Caco-2 (cell line): ENCODE measurements at regions of chr1 and their contacts with region 1.

Region 1: DNA sequence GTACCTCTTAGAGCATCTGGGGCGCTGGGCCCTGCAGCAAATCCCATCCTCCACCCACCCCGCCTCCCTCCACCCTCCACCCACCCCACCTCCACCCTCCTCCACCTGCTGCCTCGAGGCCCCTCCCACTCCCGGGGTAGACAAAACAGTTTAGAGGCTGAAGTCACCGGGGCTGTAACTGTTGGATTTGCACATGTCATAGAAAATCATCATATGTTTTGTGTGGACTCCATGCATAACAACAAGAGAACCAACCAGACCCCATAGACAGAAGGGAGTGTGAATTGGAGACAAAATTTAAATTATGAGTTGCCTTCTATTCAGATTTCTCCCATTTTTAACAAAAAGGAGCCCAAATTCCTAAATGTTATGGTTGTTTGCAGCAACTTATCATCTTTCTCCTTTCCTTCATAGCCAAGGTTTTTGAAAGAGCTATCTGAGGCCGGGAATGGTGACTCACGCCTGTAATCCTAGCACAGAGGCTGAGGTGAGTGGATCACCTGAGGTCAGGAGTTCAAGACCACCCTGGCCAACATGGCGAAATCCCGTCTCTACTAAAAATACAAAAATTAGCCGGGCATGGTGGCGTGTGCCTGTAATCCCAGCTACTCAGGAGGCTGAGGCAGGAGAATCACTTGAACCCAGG is 28.2 kb upstream of the LGALS8 start:
- DNase-seq: peak; percentile 68 to 75
- H3K4me3 ChIP-seq: no peak overlapping the region
- H3K4me3 Mint-ChIP-seq: peak overlapping the region; percentile 25
- H3K27ac Mint-ChIP-seq: peak overlapping the region; percentile 79
- H3K4me1 ChIP-seq: peaks cover 48% of the 10 kb centered on the region
- H3K4me1 Mint-ChIP-seq: peaks cover 57% of the 10 kb centered on the region
- H3K27me3 ChIP-seq: no peaks in the 10 kb centered on the region
- H3K27me3 Mint-ChIP-seq: no peaks in the 10 kb centered on the region
- CTCF ChIP-seq: no peak

Region 2: GRCh38 chr1:236394905-236395780 is 100.4 kb before region 1 on chr1:
- CTCF ChIA-PET with region 1: interaction called, 3 read pairs
- POLR2A ChIA-PET with region 1: no interaction called
- intact Hi-C with region 1: loop called (anchors 2 kb)
- DNase-seq: peak; percentile 55 to 65
- H3K4me3 ChIP-seq: peak overlapping the region; percentile 82
- H3K4me3 Mint-ChIP-seq: peak overlapping the region; percentile 85
- H3K27ac Mint-ChIP-seq: peak overlapping the region; percentile 74
- H3K4me1 ChIP-seq: peaks cover 30% of the 10 kb centered on the region
- H3K4me1 Mint-ChIP-seq: peaks cover 23% of the 10 kb centered on the region
- H3K27me3 ChIP-seq: no peaks in the 10 kb centered on the region
- H3K27me3 Mint-ChIP-seq: no peaks in the 10 kb centered on the region
- CTCF ChIP-seq: no peak

Region 3: DNA sequence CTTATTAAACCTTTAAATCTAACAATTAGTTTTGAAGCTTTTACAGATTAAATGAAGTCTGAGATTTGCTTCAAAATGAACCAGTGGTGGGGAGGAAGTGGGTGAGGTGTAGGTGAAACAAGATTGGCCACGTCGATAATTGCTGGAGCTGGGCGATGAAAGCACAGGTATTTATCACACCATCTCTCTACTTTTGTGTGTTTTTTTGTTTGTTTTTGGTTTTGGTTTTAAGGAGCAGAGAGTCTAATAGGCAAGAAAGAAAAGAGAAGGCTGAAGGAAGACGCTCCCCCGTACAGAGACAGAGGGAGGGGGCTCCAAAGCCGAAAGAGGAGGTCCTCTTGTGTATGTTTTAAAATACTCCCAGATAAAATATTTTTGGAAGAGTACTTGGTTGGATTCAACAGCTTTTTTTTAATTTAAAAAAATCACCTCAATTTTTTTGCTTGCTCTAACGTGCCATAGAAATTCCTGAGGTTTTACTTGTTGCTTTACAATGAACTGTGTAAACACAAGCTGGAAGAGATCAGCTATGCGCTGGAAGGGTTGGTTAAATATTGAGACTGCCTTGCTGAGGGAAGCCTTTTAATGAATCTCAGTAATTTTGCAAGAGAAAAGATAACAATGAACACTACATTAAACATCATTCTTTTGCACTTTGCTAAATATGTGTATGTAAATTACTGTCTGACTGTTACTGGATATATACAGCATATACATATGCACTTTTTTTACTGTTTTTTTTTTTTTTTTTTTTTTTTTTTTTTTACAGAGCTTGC is 21.5 kb after region 1 on chr1:
- CTCF ChIA-PET with region 1: no interaction called
- POLR2A ChIA-PET with region 1: interaction called, 30 read pairs
- intact Hi-C with region 1: loop called (anchors 1 kb)
- DNase-seq: peak; percentile 64 to 66
- H3K4me3 ChIP-seq: 0 out of 2 replicates have a peak overlapping the region, but pooled peaks have one; percentile 6
- H3K4me3 Mint-ChIP-seq: peak overlapping the region; percentile 73
- H3K27ac Mint-ChIP-seq: peak overlapping the region; percentile 79
- H3K4me1 ChIP-seq: peaks cover 36% of the 10 kb centered on the region
- H3K4me1 Mint-ChIP-seq: peaks cover 57% of the 10 kb centered on the region
- H3K27me3 ChIP-seq: no peaks in the 10 kb centered on the region
- H3K27me3 Mint-ChIP-seq: no peaks in the 10 kb centered on the region
- CTCF ChIP-seq: no peak

Region 4: GRCh38 chr1:236523701-236524141 is 28.1 kb after region 1 on chr1 and contains the start of gene LGALS8:
- CTCF ChIA-PET with region 1: interaction called, 4 read pairs
- POLR2A ChIA-PET with region 1: no interaction called
- intact Hi-C with region 1: loop called (anchors 1 kb)
- DNase-seq: peak; percentile 74 to 79
- H3K4me3 ChIP-seq: peak within 1 kb of the TSS; percentile 98
- H3K4me3 Mint-ChIP-seq: peak within 1 kb of the TSS; percentile 98
- H3K27ac Mint-ChIP-seq: peak within 1 kb of the TSS; percentile 98
- H3K4me1 ChIP-seq: peaks cover 8% of the 10 kb centered on the region
- H3K4me1 Mint-ChIP-seq: peaks cover 26% of the 10 kb centered on the region
- H3K27me3 ChIP-seq: no peaks in the 10 kb centered on the region
- H3K27me3 Mint-ChIP-seq: no peaks in the 10 kb centered on the region
- CTCF ChIP-seq: no peak
- total RNA-seq, gene LGALS8: 67.4 and 72.3 TPM in 2 replicates

Region 5: GRCh38 chr1:236534151-236534651 is 38.6 kb after region 1 on chr1:
- CTCF ChIA-PET with region 1: no interaction called
- POLR2A ChIA-PET with region 1: no interaction called
- intact Hi-C with region 1: loop called (anchors 1 kb)
- DNase-seq: no peak
- H3K4me3 ChIP-seq: no peak overlapping the region
- H3K4me3 Mint-ChIP-seq: no peak overlapping the region
- H3K27ac Mint-ChIP-seq: no peak overlapping the region
- H3K4me1 ChIP-seq: peaks cover 14% of the 10 kb centered on the region; the same call in 1 of the 2 replicates
- H3K4me1 Mint-ChIP-seq: peaks cover 13% of the 10 kb centered on the region
- H3K27me3 ChIP-seq: no peaks in the 10 kb centered on the region
- H3K27me3 Mint-ChIP-seq: no peaks in the 10 kb centered on the region
- CTCF ChIP-seq: no peak

Region 6: DNA sequence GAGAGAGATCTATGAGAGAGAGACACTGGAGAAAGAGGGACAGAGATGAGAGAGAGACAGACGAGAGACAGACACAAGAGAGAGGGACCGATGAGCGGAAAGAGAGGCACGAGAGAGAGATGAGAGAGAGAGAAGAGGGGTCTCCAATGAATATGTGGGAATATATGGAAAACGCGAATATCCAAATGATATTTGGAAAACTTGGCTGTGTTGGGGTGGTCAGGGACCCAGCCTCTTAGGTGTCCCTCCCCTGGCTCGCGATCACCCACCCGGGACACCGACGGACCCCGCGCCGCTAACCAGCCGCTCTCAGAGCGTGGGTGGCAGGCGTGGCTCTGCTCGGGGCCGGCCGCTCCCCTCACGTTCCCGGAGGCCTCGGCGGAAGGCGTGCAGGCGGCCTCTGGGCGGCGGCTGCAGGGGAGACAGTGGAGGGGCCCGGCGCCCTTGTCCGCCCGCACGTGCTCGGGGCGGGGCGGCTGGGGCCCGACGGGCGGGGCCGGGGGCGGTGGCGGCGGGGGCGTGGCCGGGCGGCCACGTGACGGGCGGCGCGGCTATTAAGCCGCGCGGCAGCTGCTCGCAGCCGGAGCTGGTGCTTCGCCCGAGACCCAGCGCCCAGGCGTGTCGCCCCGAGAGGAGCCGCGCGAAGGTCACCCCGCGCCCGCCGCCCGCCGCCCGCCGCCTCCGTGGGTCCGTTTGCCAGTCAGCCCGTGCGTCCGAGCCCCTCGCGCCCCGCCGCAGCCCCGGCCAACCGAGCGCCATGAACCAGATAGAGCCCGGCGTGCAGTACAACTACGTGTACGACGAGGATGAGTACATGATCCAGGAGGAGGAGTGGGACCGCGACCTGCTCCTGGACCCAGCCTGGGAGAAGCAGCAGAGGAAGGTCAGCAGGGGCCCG is 190.6 kb after region 1 on chr1 and contains the start of gene ACTN2:
- CTCF ChIA-PET with region 1: no interaction called
- POLR2A ChIA-PET with region 1: no interaction called
- intact Hi-C with region 1: no loop called
- DNase-seq: peak; percentile 52 to 63
- H3K4me3 ChIP-seq: peak within 1 kb of the TSS; percentile 34
- H3K4me3 Mint-ChIP-seq: peak within 1 kb of the TSS; percentile 69
- H3K27ac Mint-ChIP-seq: no peak within 1 kb of the TSS
- H3K4me1 ChIP-seq: no peaks in the 10 kb centered on the region
- H3K4me1 Mint-ChIP-seq: peaks cover 7% of the 10 kb centered on the region
- H3K27me3 ChIP-seq: no peaks in the 10 kb centered on the region; the same call in 1 of the 2 replicates
- H3K27me3 Mint-ChIP-seq: peaks cover 30% of the 10 kb centered on the region
- CTCF ChIP-seq: no peak
- total RNA-seq, gene ACTN2: not detected in 2 replicates